Esophagus muscularis mucosa (tissue), 4 donors: ENCODE measurements at regions of chr19 and their contacts with region 1.

Region 1: GRCh38 chr19:12681074-12681951 is at the start of gene DHPS:
- DNase-seq: peak; percentile 97
- H3K4me3 ChIP-seq: peak within 1 kb of the TSS; percentile 87 to 99 (median 96)
- H3K27ac ChIP-seq: peak within 1 kb of the TSS; percentile 95 to 100 (median 98)
- H3K4me1 ChIP-seq: peaks cover 16 to 30% (median 27%) of the 10 kb centered on the region in 4 donors
- H3K27me3 ChIP-seq: no peaks in the 10 kb centered on the region
- CTCF ChIP-seq: no peak
- EP300 ChIP-seq: no peak
- POLR2A ChIP-seq: no peak
- total RNA-seq, gene DHPS: 74.3 to 92.3 (median 85.0) TPM

Region 2: DNA sequence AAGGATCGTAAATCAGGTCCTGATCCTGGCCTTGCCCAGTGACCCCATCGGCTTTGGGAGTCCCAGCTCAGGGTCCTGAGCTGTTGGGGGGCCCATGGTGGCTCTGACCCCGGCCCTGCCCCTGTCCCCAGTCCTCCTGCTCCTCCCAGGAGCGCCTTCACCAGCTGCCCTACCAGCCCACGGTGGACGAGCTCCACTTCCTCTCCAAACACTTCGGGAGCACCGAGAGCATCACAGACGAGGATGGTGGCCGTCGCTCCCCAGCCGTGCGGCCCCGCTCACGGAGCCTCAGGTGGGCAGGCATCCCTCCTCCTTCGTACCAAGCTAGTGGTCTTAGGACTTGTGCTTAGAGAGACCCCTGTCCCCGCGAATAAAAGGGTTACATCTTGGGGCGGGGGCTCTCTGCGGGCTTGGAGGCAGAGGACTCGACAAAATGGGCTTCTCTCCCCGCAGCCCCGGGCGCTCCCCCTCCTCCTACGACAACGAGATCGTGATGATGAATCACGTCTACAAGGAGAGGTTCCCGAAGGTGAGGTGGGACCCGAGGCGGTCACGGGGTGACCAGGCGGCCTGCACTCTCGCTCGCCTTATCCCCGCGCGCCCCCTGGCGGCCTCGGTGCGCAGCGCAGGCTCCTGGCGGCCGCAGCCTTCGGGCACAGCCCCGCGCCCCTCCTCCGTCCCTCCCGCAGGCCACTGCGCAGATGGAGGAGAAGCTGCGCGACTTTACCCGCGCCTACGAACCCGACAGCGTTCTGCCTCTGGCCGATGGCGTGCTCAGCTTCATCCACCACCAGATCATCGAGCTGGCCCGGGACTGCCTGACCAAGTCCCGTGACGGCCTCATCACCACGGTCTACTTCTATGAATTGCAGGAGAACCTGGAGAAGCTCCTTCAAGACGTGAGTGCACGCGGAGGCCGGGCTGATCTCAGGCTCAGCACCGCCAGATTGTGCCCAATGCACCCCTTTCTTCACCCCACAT is 166.1 kb after region 1 on chr19:
- intact Hi-C with region 1: loop called (anchors 10 kb)
- DNase-seq: peak; percentile 95
- H3K4me3 ChIP-seq: peak overlapping the region; percentile 19 to 46 (median 30)
- H3K27ac ChIP-seq: no peak overlapping the region
- H3K4me1 ChIP-seq: peaks cover 8 to 12% (median 11%) of the 10 kb centered on the region in 4 donors
- H3K27me3 ChIP-seq: peaks cover 0 to 47% (median 9%) of the 10 kb centered on the region in 4 donors
- CTCF ChIP-seq: peak in 2 of 3 experiments; percentile 99
- EP300 ChIP-seq: no peak
- POLR2A ChIP-seq: no peak